ENCODE measurements at regions of chr5 and their contacts with region 1.

Region 1: GRCh38 chr5:96963267-96963666 is 27.4 kb downstream of the LNPEP start:
- DNase-seq: peak in 1 of 35 experiments; percentile 43
- ATAC-seq: peak in 2 of 4 experiments; percentile 32 to 56
- H3K4me3 ChIP-seq: no peak overlapping the region
- H3K4me3 Mint-ChIP-seq: peak overlapping the region; percentile 68 to 78 (median 72)
- H3K27ac ChIP-seq: peak overlapping the region; percentile 40
- H3K27ac Mint-ChIP-seq: peak overlapping the region; percentile 95
- H3K4me1 ChIP-seq: peaks cover 22 to 54% of the 10 kb centered on the region in 2 experiments
- H3K4me1 Mint-ChIP-seq: peaks cover 76 to 85% (median 82%) of the 10 kb centered on the region in 3 donors
- H3K27me3 ChIP-seq: no peaks in the 10 kb centered on the region
- H3K27me3 Mint-ChIP-seq: no peaks in the 10 kb centered on the region

Region 2: DNA sequence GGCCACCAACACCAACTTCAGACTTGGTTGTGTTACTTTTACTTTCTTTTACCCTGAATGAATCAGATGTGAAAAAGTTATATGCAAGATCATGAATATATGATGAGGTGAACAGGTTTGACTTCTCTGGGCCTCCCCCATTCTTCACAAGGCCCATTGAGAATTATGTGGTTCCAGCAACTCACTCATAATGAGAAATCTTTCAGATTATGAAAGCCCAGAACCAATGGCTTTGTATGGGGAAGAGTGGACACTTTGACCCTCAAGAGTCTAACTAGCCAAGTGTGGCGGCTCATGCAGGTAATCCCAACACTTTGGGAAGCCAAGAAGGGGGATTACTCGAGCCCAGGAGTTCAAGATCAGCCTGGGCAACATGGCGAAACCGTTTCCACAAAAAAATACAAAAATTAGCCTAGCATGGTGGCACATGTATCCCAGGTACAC is 43.5 kb before region 1 on chr5:
- CTCF ChIA-PET with region 1: interaction called, 3 read pairs
- POLR2A ChIA-PET with region 1: interaction called in 1 of 2 experiments, 10 read pairs
- DNase-seq: no peak
- ATAC-seq: no peak
- H3K4me3 ChIP-seq: no peak overlapping the region
- H3K4me3 Mint-ChIP-seq: no peak overlapping the region
- H3K27ac ChIP-seq: no peak overlapping the region
- H3K27ac Mint-ChIP-seq: peak overlapping the region; percentile 35 to 87
- H3K4me1 ChIP-seq: peaks cover 11 to 14% of the 10 kb centered on the region in 2 experiments
- H3K4me1 Mint-ChIP-seq: peaks cover 33 to 49% (median 41%) of the 10 kb centered on the region in 3 donors
- H3K27me3 ChIP-seq: no peaks in the 10 kb centered on the region
- H3K27me3 Mint-ChIP-seq: no peaks in the 10 kb centered on the region

Region 3: GRCh38 chr5:96934708-96935558 is 28.3 kb before region 1 on chr5:
- CTCF ChIA-PET with region 1: interaction called in 1 of 2 experiments, 17 read pairs
- POLR2A ChIA-PET with region 1: interaction called, 6 to 9 read pairs
- DNase-seq: peak; percentile 90 to 98 (median 94)
- ATAC-seq: peak; percentile 73 to 78 (median 76)
- H3K4me3 ChIP-seq: peak overlapping the region; percentile 94 to 98
- H3K4me3 Mint-ChIP-seq: peak overlapping the region; percentile 89 to 94 (median 90)
- H3K27ac ChIP-seq: peak overlapping the region; percentile 94
- H3K27ac Mint-ChIP-seq: peak overlapping the region; percentile 96 to 100
- H3K4me1 ChIP-seq: peaks cover 21 to 53% of the 10 kb centered on the region in 2 experiments
- H3K4me1 Mint-ChIP-seq: peaks cover 70 to 72% (median 71%) of the 10 kb centered on the region in 3 donors
- H3K27me3 ChIP-seq: no peaks in the 10 kb centered on the region
- H3K27me3 Mint-ChIP-seq: no peaks in the 10 kb centered on the region

Region 4: DNA sequence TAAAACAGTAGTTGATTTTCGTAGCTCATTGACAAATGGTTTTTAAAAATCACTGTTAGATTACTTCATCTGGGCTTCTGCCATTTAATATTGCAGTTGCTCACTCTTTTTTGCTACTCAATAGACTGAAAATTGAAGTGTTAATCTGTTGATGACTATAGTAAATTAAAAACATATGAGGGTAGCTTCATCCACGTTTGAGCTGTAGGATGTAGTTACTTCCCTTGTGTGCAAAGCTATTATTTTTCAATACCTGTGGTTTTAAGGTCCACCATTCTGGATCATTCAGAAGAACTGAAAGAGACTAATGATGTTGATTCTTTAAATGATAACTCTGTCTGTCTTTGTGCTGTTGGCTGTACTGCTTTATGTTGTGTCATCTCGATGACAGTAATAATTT is 47.3 kb after region 1 on chr5:
- CTCF ChIA-PET with region 1: no interaction called
- POLR2A ChIA-PET with region 1: no interaction called
- DNase-seq: no peak
- ATAC-seq: no peak
- H3K4me3 ChIP-seq: no peak overlapping the region
- H3K4me3 Mint-ChIP-seq: no peak overlapping the region
- H3K27ac ChIP-seq: no peak overlapping the region
- H3K27ac Mint-ChIP-seq: peak overlapping the region in 1 of 2 donors; percentile 5
- H3K4me1 ChIP-seq: peaks cover 5 to 16% of the 10 kb centered on the region in 2 experiments
- H3K4me1 Mint-ChIP-seq: peaks cover 22 to 42% (median 28%) of the 10 kb centered on the region in 3 donors
- H3K27me3 ChIP-seq: no peaks in the 10 kb centered on the region
- H3K27me3 Mint-ChIP-seq: no peaks in the 10 kb centered on the region

Measured in T-cell (primary cell).